Aorta (tissue), 5 donors: ENCODE measurements at regions of chr10 and their contacts with region 1.

Region 1: DNA sequence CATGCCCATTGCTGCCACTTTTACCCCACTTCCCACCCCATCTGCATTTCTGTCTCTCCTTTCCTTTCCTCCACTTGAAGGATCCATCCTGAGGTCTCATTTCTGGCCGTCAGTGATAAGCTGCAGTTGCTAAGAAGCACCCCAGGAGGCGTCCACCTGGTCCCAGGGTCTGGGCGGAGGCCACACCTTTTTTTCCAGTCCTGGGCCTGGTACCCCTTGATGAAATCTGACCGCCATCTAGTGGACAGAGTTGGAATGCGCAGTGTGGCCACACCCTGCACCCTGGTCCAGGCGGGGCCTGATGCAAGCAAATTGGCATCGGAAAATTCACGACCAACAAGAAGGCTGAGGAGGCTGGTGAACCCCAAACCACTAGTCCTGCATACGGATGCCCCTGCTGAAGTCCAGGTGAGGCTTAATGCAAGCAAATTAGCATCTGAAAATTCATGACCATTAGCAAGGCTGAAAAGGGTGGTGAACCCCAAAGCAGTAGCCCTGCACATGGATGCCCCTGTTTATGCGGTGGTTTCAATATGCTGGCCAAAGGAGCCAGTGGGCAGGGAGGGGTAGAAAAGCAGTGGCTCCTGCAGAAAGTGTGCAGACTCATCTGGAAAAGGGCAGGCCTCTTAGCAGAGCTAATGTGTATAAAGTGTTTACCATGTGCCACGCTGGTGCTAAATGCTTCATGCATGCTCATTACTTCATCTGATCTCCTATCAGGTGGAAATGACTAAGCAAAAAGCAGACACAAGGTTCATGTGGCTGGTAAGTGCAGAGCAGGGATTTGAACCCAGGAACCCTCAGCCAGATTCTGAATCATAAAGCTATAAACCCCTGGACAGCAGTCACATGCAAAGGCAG is 43.2 kb downstream of the GPAM start:
- DNase-seq: peak; percentile 69 to 84
- ATAC-seq: peak; percentile 68
- H3K4me3 ChIP-seq: no peak overlapping the region
- H3K27ac ChIP-seq: no peak overlapping the region
- H3K4me1 ChIP-seq: no peaks in the 10 kb centered on the region
- H3K27me3 ChIP-seq: no peaks in the 10 kb centered on the region

Region 2: DNA sequence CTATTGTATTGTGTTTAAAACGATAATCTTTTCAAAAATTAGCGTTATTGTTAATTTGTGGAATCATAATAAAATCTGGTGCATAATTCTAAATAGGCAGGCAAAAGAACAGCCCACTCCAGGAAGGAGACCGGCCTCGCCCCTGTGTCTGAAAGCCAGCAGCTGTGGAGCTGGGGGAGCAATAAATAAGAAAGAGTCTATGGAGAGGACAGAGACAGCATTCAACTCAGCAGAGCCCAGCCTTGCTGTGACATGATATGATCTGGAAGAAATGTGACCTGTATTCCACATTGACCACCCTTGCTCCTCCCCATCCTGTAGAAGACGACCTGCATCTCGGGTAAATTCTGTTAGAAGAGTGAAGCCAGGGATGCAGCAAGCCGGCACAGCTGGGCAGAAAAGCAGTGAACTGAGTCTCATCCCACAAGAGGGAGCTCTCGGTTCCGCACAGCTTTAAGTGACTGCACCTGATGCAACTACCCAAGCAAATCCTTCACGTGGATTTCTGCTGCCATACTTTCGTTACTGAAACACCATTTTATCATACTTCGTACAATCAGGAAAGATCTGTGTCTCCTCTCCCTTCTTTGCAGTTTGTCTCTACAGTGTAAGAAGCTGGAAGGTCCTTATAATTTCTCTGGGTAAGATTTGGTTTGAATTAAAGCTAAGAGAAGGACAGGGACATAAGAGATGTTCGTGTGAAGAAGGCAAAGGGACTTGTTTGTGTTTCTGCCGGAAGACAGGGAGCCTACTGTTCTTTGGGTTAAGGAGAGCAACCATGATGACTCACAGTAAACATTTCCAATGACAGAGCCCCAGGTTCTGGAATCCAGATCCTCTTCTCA is 383.9 kb before region 1 on chr10:
- intact Hi-C with region 1: loop called (anchors 5 to 10 kb)
- DNase-seq: peak in 1 of 2 donors; percentile 49
- ATAC-seq: no peak
- H3K4me3 ChIP-seq: no peak overlapping the region
- H3K27ac ChIP-seq: no peak overlapping the region
- H3K4me1 ChIP-seq: no peaks in the 10 kb centered on the region
- H3K27me3 ChIP-seq: no peaks in the 10 kb centered on the region

Region 3: GRCh38 chr10:111875725-111876124 is 264.6 kb before region 1 on chr10:
- intact Hi-C with region 1: no loop called
- DNase-seq: no peak
- ATAC-seq: no peak
- H3K4me3 ChIP-seq: no peak overlapping the region
- H3K27ac ChIP-seq: no peak overlapping the region
- H3K4me1 ChIP-seq: no peaks in the 10 kb centered on the region
- H3K27me3 ChIP-seq: no peaks in the 10 kb centered on the region

Region 4: GRCh38 chr10:111990734-111991133 is 149.6 kb before region 1 on chr10:
- intact Hi-C with region 1: no loop called
- DNase-seq: no peak
- ATAC-seq: no peak
- H3K4me3 ChIP-seq: no peak overlapping the region
- H3K27ac ChIP-seq: no peak overlapping the region
- H3K4me1 ChIP-seq: no peaks in the 10 kb centered on the region
- H3K27me3 ChIP-seq: no peaks in the 10 kb centered on the region